ENCODE measurements at regions of chr9 and their contacts with region 1.

Region 1: GRCh38 chr9:37156781-37157356 is 36.5 kb downstream of the ZCCHC7 start:
- DNase-seq: no peak
- H3K4me3 ChIP-seq: no peak overlapping the region
- CTCF ChIP-seq: no peak
- POLR2A ChIP-seq: no peak

Region 2: GRCh38 chr9:37187713-37188439 is 31.0 kb after region 1 on chr9:
- intact Hi-C with region 1: loop called (anchors 1 kb)
- DNase-seq: no peak
- H3K4me3 ChIP-seq: no peak overlapping the region
- CTCF ChIP-seq: no peak
- POLR2A ChIP-seq: no peak

Region 3: GRCh38 chr9:37251452-37251851 is 94.6 kb after region 1 on chr9:
- intact Hi-C with region 1: no loop called
- DNase-seq: no peak
- H3K4me3 ChIP-seq: no peak overlapping the region
- CTCF ChIP-seq: no peak
- POLR2A ChIP-seq: no peak

Region 4: GRCh38 chr9:37339923-37340322 is 183.1 kb after region 1 on chr9:
- intact Hi-C with region 1: no loop called
- DNase-seq: no peak
- H3K4me3 ChIP-seq: no peak overlapping the region
- CTCF ChIP-seq: no peak
- POLR2A ChIP-seq: no peak

Measured in lower leg skin (tissue), 4 donors.